Heart left ventricle (tissue), 16 donors: ENCODE measurements at regions of chrX and their contacts with region 1.

Region 1: GRCh38 chrX:40792433-40792832 is 57.1 kb upstream of the MED14 start:
- DNase-seq: no peak
- ATAC-seq: no peak
- H3K4me3 ChIP-seq: no peak overlapping the region
- H3K27ac ChIP-seq: no peak overlapping the region
- H3K4me1 ChIP-seq: peaks cover 0 to 9% (median 0%) of the 10 kb centered on the region in 12 donors
- H3K27me3 ChIP-seq: peaks cover 0 to 51% (median 0%) of the 10 kb centered on the region in 9 donors
- CTCF ChIP-seq: no peak
- POLR2A ChIP-seq: no peak

Region 2: GRCh38 chrX:40539214-40540142 is 253.0 kb before region 1 on chrX:
- intact Hi-C with region 1: loop called in 1 of 10 experiments (anchors 5 kb)
- DNase-seq: peak in 4 of 5 donors; percentile 20 to 65 (median 53)
- ATAC-seq: peak; percentile 37 to 88 (median 76)
- H3K4me3 ChIP-seq: no peak overlapping the region
- H3K27ac ChIP-seq: peak overlapping the region in 4 of 12 donors; percentile 19 to 55 (median 26)
- H3K4me1 ChIP-seq: peaks cover 0 to 11% (median 0%) of the 10 kb centered on the region in 12 donors
- H3K27me3 ChIP-seq: peaks cover 0 to 65% (median 0%) of the 10 kb centered on the region in 9 donors
- CTCF ChIP-seq: peak in 1 of 12 donors; percentile 18
- POLR2A ChIP-seq: no peak

Region 3: GRCh38 chrX:40663880-40664633 is 128.4 kb before region 1 on chrX:
- intact Hi-C with region 1: loop called in 6 of 10 experiments (anchors 5 to 10 kb)
- DNase-seq: peak in 2 of 5 donors; percentile 10 to 26
- ATAC-seq: peak in 2 of 4 donors; percentile 55 to 56
- H3K4me3 ChIP-seq: no peak overlapping the region
- H3K27ac ChIP-seq: no peak overlapping the region
- H3K4me1 ChIP-seq: no peaks in the 10 kb centered on the region
- H3K27me3 ChIP-seq: peaks cover 0 to 3% (median 0%) of the 10 kb centered on the region in 9 donors
- CTCF ChIP-seq: peak in 8 of 12 donors; percentile 6 to 42 (median 30)
- POLR2A ChIP-seq: no peak

Region 4: DNA sequence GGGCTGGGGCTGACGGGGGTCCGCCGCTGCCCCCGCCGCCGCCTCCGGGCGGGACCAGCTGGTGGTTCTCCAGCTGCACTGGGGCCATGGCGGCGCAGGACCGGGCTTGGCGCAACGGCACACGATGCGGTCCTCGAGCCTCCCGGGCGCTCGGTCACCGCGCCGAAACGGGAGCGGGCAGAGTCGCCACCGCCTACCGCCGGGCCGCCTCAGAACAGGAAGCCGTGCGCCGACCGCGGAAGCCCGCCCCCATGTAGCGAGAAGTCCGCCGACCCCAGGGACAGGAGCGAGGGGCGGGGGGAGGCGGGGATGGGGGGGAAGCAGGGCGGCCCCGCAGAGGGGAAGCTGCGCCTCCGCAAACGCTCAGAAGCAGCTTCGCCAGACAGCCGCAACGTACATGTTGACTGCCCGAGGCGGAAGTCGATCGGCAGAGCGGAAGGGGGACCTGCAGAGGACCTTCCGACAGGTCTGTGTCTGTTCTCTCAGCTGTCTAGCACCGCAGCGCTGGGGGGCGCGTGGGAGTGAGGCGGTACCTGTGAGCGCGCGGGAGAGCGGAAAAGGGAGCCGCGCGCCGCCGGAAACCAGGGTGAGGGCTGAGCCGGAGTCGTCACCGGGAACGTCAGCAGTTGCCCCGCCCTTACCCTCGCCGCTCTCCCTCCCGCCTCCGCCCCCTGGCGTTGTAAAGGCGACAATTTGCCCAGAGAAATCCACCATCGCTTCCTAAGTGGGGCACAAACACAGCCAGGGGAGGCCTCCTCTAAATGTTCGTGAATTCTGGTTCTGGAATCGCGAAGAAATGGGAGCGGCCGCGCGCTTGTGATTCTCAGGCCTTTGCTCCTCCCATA is 56.9 kb before region 1 on chrX and contains the start of gene MED14:
- intact Hi-C with region 1: loop called in 2 of 10 experiments (anchors 10 kb)
- DNase-seq: peak; percentile 88 to 92 (median 89)
- ATAC-seq: peak; percentile 98 to 99 (median 98)
- H3K4me3 ChIP-seq: peak within 1 kb of the TSS; percentile 40 to 97 (median 80)
- H3K27ac ChIP-seq: peak within 1 kb of the TSS; percentile 91 to 100 (median 94)
- H3K4me1 ChIP-seq: peaks cover 0 to 28% (median 7%) of the 10 kb centered on the region in 12 donors
- H3K27me3 ChIP-seq: peaks cover 0 to 50% (median 0%) of the 10 kb centered on the region in 9 donors
- CTCF ChIP-seq: peak; percentile 35 to 61 (median 42)
- POLR2A ChIP-seq: peak in 1 of 2 donors; percentile 38
- total RNA-seq, gene MED14: 17.5 to 40.9 (median 27.4) TPM